BJ (cell line): ENCODE measurements at regions of chr2 and their contacts with region 1.

Region 1: GRCh38 chr2:60659026-60659425 is 97.0 kb upstream of the PAPOLG start:
- DNase-seq: no peak
- H3K4me3 ChIP-seq: no peak overlapping the region
- H3K27me3 ChIP-seq: peaks cover 2% of the 10 kb centered on the region; the same call in 1 of the 2 replicates
- CTCF ChIP-seq: no peak

Region 2: GRCh38 chr2:60641811-60642788 is 16.9 kb before region 1 on chr2:
- CTCF ChIA-PET with region 1: interaction called, 10 read pairs
- POLR2A ChIA-PET with region 1: no interaction called
- DNase-seq: no peak
- H3K4me3 ChIP-seq: no peak overlapping the region
- H3K27me3 ChIP-seq: peaks cover 2% of the 10 kb centered on the region
- CTCF ChIP-seq: peak; percentile 74

Region 3: GRCh38 chr2:60674524-60675165 is 15.6 kb after region 1 on chr2:
- CTCF ChIA-PET with region 1: interaction called, 15 read pairs
- POLR2A ChIA-PET with region 1: no interaction called
- DNase-seq: peak; percentile 1
- H3K4me3 ChIP-seq: no peak overlapping the region
- H3K27me3 ChIP-seq: no peaks in the 10 kb centered on the region; the same call in 1 of the 2 replicates
- CTCF ChIP-seq: peak; percentile 99